Heart left ventricle (tissue), 16 donors: ENCODE measurements at regions of chr11 and their contacts with region 1.

Region 1: DNA sequence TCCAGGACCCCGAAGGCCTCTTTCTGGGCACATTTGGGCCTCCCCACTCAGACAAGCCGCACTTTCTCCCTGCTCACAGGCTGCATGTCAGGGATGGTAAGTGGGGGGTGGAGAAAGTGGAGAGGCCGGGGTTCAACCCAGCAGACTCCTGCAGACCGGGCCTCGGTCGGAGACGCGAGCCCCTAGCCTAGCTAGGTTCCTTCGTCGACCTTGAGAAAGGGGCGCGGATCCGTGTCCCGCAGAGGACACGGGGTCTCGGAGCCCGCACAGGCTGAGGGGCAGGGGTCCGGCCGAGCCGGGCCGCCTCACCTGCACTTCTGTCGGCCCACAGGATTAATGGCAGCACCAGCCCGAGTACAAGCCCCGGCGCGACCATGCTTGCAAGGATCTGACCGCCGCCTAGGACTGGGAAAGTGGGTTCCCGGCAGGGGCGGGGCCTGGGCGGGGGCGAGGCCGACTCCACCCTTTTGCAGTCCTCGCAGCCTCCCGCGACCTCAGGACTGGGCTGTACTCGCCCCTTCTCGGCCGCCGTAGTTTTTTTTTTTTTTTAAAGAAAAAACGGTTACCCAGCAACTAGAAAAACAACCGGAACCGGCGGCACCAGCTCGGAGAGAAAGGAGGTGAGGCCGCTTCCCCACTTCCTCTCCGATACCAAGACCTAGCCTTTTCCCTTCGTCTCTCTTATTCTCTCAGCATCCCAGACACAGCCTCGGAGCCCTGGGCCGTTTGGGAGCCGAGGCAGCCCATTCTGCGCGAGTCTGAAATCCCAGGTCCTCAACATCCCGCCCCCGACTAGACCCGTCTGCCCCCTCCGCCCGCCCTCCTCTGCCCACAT is at the starts of genes SIAE and SPA17:
- DNase-seq: peak; percentile 94 to 97 (median 96)
- ATAC-seq: peak; percentile 99 to 100 (median 99)
- H3K4me3 ChIP-seq: peak within 1 kb of the TSS; percentile 64 to 85 (median 76)
- H3K27ac ChIP-seq: peak within 1 kb of the TSS; percentile 60 to 93 (median 88)
- H3K4me1 ChIP-seq: peaks cover 0 to 45% (median 26%) of the 10 kb centered on the region in 12 donors
- H3K27me3 ChIP-seq: no peaks in the 10 kb centered on the region
- CTCF ChIP-seq: no peak
- POLR2A ChIP-seq: peak in 1 of 2 donors; percentile 78
- total RNA-seq, gene SIAE: 36.7 to 87.8 (median 60.1) TPM
- total RNA-seq, gene SPA17: 1.3 to 4.4 (median 2.8) TPM

Region 2: GRCh38 chr11:124717786-124718651 is 44.5 kb after region 1 on chr11:
- intact Hi-C with region 1: loop called in 4 of 10 experiments (anchors 2 to 5 kb)
- DNase-seq: peak in 4 of 5 donors; percentile 38 to 81 (median 64)
- ATAC-seq: peak; percentile 48 to 72 (median 60)
- H3K4me3 ChIP-seq: peak overlapping the region; percentile 3 to 58 (median 49)
- H3K27ac ChIP-seq: peak overlapping the region in 11 of 12 donors; percentile 8 to 74 (median 31)
- H3K4me1 ChIP-seq: peaks cover 0 to 32% (median 13%) of the 10 kb centered on the region in 12 donors
- H3K27me3 ChIP-seq: peaks cover 0 to 48% (median 25%) of the 10 kb centered on the region in 9 donors
- CTCF ChIP-seq: no peak
- POLR2A ChIP-seq: no peak

Region 3: GRCh38 chr11:124739479-124740276 is 66.1 kb after region 1 on chr11 and contains the start of gene NRGN:
- intact Hi-C with region 1: loop called in 4 of 10 experiments (anchors 5 kb)
- DNase-seq: peak; percentile 92 to 95 (median 93)
- ATAC-seq: peak; percentile 95 to 99 (median 99)
- H3K4me3 ChIP-seq: peak within 1 kb of the TSS; percentile 37 to 78 (median 58)
- H3K27ac ChIP-seq: peak within 1 kb of the TSS in 6 of 12 donors; percentile 2 to 42 (median 28)
- H3K4me1 ChIP-seq: peaks cover 0 to 42% (median 16%) of the 10 kb centered on the region in 12 donors
- H3K27me3 ChIP-seq: peaks cover 0 to 38% (median 13%) of the 10 kb centered on the region in 9 donors
- CTCF ChIP-seq: peak in 1 of 12 donors; percentile 25
- POLR2A ChIP-seq: no peak
- total RNA-seq, gene NRGN: 1.2 to 9.0 (median 3.3) TPM

Region 4: DNA sequence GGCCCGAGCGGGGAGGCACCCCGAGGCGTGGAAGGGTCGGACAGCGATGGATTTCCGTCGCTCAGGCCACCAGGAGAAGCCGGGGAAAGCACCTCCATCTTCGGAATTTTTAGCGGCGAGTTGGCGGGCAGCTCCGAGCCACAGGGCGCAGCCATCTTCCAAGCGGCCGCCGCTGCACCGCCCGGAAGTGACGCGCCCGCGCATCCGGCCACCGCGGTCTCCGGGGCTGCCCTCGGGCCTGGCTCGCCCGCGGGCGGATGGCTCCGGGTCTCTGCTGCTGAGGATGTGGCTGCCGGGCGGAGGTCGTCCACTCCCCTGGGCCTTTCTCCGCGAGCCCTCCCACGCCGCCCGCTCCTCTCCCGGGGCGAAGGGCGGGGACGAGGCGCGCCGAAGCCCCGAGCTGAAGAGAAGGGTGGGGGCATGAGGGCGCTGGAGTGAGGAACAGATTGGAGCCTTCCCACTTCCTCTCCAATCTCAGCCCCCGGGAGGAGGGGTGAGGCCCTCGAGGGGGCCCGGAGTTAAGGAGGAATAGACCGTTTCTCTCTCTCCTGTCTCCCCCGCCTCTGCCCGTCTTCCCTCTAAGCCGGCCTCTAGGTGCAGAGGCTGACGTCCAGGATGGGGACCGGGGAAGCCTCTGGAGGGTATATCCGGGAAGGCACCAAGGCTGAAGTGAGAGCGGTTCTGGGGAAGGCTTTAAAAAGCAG is 126.8 kb after region 1 on chr11 and contains the start of gene MSANTD2:
- intact Hi-C with region 1: loop called in 2 of 10 experiments (anchors 5 to 10 kb)
- DNase-seq: peak; percentile 83 to 91 (median 87)
- ATAC-seq: peak; percentile 91 to 98 (median 98)
- H3K4me3 ChIP-seq: peak within 1 kb of the TSS; percentile 71 to 94 (median 88)
- H3K27ac ChIP-seq: peak within 1 kb of the TSS; percentile 90 to 100 (median 98)
- H3K4me1 ChIP-seq: peaks cover 3 to 38% (median 32%) of the 10 kb centered on the region in 12 donors
- H3K27me3 ChIP-seq: no peaks in the 10 kb centered on the region
- CTCF ChIP-seq: peak in 1 of 12 donors; percentile 20
- POLR2A ChIP-seq: peak in 1 of 2 donors; percentile 86
- total RNA-seq, gene MSANTD2: 2.2 to 5.4 (median 3.1) TPM

Region 5: GRCh38 chr11:124825876-124826275 is 152.3 kb after region 1 on chr11:
- intact Hi-C with region 1: no loop called
- DNase-seq: no peak
- ATAC-seq: no peak
- H3K4me3 ChIP-seq: no peak overlapping the region
- H3K27ac ChIP-seq: no peak overlapping the region
- H3K4me1 ChIP-seq: no peaks in the 10 kb centered on the region
- H3K27me3 ChIP-seq: peaks cover 0 to 7% (median 0%) of the 10 kb centered on the region in 9 donors
- CTCF ChIP-seq: no peak
- POLR2A ChIP-seq: no peak

Region 6: GRCh38 chr11:124865921-124866583 is 192.5 kb after region 1 on chr11:
- intact Hi-C with region 1: loop called in 1 of 10 experiments (anchors 10 kb)
- DNase-seq: peak in 1 of 5 donors; percentile 31
- ATAC-seq: peak in 3 of 4 donors; percentile 37 to 44 (median 37)
- H3K4me3 ChIP-seq: peak overlapping the region in 11 of 12 donors; percentile 17 to 45 (median 36)
- H3K27ac ChIP-seq: no peak overlapping the region
- H3K4me1 ChIP-seq: peaks cover 5 to 59% (median 34%) of the 10 kb centered on the region in 12 donors
- H3K27me3 ChIP-seq: peaks cover 54 to 100% (median 91%) of the 10 kb centered on the region in 9 donors
- CTCF ChIP-seq: peak; percentile 65 to 87 (median 79)
- POLR2A ChIP-seq: no peak